OCI-LY7 (cell line): ENCODE measurements at regions of chr3 and their contacts with region 1.

Region 1: DNA sequence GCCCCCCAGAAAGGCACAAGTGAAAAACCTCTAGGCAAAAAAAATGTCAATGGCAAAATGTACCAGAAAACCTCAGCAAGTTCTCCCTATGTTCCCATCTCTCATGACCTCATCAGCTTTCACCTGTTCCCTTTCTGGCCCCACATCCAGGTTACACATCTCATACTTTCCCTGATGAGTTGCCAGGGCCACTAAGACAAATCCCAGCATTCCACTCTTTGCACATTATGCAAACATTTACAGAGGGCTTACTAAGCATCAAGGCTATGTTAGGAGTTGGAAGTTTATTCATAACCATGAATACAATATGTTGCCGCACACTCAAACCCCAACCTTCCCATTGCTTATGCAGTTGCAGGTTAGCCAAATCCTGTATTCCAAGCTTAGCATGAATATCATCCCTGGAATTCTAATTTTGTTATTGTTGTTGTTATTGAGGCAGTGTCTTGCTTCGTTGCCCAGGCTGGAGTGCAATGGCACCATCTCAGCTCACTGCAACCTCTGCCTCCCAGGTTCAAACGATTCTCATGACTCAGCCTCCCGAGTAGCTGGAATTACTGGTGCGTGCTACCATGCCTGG is 129.3 kb upstream of the UBE2E2 start:
- DNase-seq: no peak
- H3K4me3 ChIP-seq: no peak overlapping the region
- H3K27ac ChIP-seq: no peak overlapping the region
- H3K4me1 ChIP-seq: peaks cover 37% of the 10 kb centered on the region
- CTCF ChIP-seq: no peak

Region 2: DNA sequence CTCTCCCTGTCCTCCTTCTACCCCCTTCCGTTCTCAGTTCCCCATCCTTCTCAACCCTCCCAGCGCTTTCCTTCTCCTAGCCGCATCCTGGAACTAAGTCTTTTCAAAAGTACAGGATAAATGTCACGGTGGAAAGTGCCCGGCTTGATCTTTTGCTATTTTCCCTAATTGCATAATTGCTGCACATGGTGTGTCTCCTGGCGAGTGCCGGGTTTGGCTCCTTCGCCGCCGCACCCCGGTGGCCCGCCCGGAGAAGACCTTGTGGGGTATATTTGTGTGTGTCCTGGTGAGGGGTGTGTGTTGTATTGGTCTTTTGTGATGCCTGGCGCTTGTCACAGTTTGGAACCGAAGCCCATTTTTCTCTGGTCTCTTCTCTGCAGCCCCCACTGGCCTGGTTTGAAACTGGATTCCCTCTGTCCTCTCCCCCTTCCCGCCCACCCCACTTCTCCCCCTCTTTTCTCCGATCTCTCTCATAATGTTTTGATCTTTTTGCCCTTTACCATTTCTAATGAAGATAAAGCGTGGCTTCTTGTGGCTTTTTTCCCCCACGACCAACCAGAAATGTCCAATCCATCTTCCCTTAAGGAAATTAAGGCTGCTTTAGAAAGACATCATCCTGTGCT is 130.0 kb after region 1 on chr3:
- CTCF ChIA-PET with region 1: no interaction called
- POLR2A ChIA-PET with region 1: no interaction called
- intact Hi-C with region 1: no loop called
- DNase-seq: peak; percentile 46
- H3K4me3 ChIP-seq: peak overlapping the region; percentile 99
- H3K27ac ChIP-seq: peak overlapping the region; percentile 33
- H3K4me1 ChIP-seq: peaks cover 34% of the 10 kb centered on the region
- CTCF ChIP-seq: no peak

Region 3: GRCh38 chr3:23611737-23612295 is 538.0 kb after region 1 on chr3:
- CTCF ChIA-PET with region 1: interaction called, 19 read pairs
- POLR2A ChIA-PET with region 1: no interaction called
- intact Hi-C with region 1: no loop called
- DNase-seq: peak; percentile 64
- H3K4me3 ChIP-seq: peak overlapping the region; percentile 41
- H3K27ac ChIP-seq: peak overlapping the region; percentile 5
- H3K4me1 ChIP-seq: peaks cover 46% of the 10 kb centered on the region
- CTCF ChIP-seq: no peak